ENCODE measurements at regions of chr12 and their contacts with region 1.

Region 1: GRCh38 chr12:125330645-125331341 is 265.6 kb downstream of the AACS start:
- DNase-seq: peak; percentile 37
- ATAC-seq: peak; percentile 49
- H3K4me3 Mint-ChIP-seq: no peak overlapping the region
- H3K27ac Mint-ChIP-seq: no peak overlapping the region
- H3K4me1 Mint-ChIP-seq: no peaks in the 10 kb centered on the region
- H3K27me3 Mint-ChIP-seq: peaks cover 28% of the 10 kb centered on the region
- CTCF ChIP-seq: no peak

Region 2: GRCh38 chr12:125203145-125203765 is 127.5 kb before region 1 on chr12:
- CTCF ChIA-PET with region 1: no interaction called
- POLR2A ChIA-PET with region 1: no interaction called
- intact Hi-C with region 1: no loop called
- DNase-seq: no peak
- ATAC-seq: no peak
- H3K4me3 Mint-ChIP-seq: no peak overlapping the region
- H3K27ac Mint-ChIP-seq: no peak overlapping the region
- H3K4me1 Mint-ChIP-seq: no peaks in the 10 kb centered on the region
- H3K27me3 Mint-ChIP-seq: peaks cover 30% of the 10 kb centered on the region
- CTCF ChIP-seq: no peak

Region 3: DNA sequence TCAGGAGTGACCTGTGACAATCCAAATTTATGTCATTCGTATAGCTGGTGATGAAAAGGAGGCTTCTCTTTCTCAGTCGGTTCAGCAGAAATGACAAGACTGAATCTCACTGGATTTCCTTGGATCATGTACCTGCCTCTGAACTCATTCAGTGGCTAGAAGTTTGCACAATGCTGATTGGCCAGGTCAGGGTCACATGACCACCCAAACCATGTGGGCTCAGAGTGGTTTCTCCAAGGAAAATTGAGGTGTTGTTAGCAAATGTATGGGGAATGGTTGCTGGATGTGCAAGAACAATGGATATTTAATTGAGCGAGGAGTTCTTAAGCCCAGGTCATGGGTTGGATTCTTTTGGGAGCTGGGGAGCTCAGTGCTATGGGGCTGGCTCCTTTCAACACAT is 38.1 kb before region 1 on chr12:
- CTCF ChIA-PET with region 1: no interaction called
- POLR2A ChIA-PET with region 1: interaction called, 13 read pairs
- intact Hi-C with region 1: no loop called
- DNase-seq: no peak
- ATAC-seq: no peak
- H3K4me3 Mint-ChIP-seq: no peak overlapping the region
- H3K27ac Mint-ChIP-seq: no peak overlapping the region
- H3K4me1 Mint-ChIP-seq: no peaks in the 10 kb centered on the region
- H3K27me3 Mint-ChIP-seq: peaks cover 5% of the 10 kb centered on the region
- CTCF ChIP-seq: no peak

Region 4: GRCh38 chr12:125402874-125403789 is 72.3 kb after region 1 on chr12:
- CTCF ChIA-PET with region 1: no interaction called
- POLR2A ChIA-PET with region 1: no interaction called
- intact Hi-C with region 1: loop called (anchors 5 kb)
- DNase-seq: no peak
- ATAC-seq: no peak
- H3K4me3 Mint-ChIP-seq: no peak overlapping the region
- H3K27ac Mint-ChIP-seq: no peak overlapping the region
- H3K4me1 Mint-ChIP-seq: peaks cover 11% of the 10 kb centered on the region
- H3K27me3 Mint-ChIP-seq: peaks cover 21% of the 10 kb centered on the region
- CTCF ChIP-seq: no peak